Activated CD4-positive, alpha-beta T cell treated with anti-CD3 and anti-CD28 coated beads for 36 hours (primary cell): ENCODE measurements at regions of chr12 and their contacts with region 1.

Region 1: DNA sequence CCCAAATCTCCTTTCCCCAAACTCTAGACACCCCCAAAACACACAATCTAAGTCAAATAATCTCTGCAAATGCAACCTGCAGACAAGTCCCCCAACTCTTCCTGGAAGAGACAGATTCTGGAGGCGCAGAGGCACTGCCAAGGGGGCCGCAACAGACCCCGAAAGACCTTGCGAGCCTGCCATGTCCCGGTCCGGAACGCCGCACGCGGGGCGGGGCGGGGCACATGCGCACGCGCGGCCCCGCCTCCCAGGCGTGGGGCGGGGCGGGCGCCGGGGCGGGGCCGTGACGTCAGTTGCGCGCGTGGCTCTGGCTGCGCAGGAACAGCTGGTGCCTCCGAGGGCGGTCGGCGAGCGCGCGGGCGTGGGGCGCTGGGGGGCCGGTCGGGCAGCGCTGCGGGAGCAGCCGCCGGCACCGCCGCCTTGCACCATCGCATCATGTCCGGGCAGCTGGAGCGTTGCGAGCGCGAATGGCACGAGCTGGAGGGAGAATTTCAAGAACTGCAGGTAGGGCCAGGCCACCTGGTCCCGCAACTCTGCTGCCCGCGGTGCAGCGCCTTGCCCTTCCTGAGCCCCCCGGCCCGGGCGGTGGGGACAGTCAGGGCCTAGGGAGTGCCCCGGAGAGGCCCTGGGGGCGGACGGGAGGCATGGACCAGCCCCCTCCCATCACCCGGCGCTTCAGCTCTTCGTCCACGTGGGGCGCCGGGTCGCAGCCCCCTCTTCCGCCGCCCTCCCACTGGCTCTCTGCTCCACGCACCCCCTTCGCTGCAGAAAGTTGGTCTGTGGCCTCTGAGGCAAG is at the start of gene TMEM120B:
- DNase-seq: peak; percentile 90
- ATAC-seq: peak; percentile 87
- H3K4me3 Mint-ChIP-seq: peak within 1 kb of the TSS; percentile 95
- H3K27ac Mint-ChIP-seq: peak within 1 kb of the TSS; percentile 91
- H3K4me1 Mint-ChIP-seq: peaks cover 16% of the 10 kb centered on the region
- H3K27me3 Mint-ChIP-seq: no peaks in the 10 kb centered on the region
- total RNA-seq, gene TMEM120B: 8.8 to 11.7 TPM

Region 2: GRCh38 chr12:121467115-121467793 is 245.4 kb before region 1 on chr12:
- CTCF ChIA-PET with region 1: no interaction called
- POLR2A ChIA-PET with region 1: no interaction called
- intact Hi-C with region 1: loop called in 1 of 2 experiments (anchors 1 kb)
- DNase-seq: peak; percentile 93
- ATAC-seq: peak; percentile 94
- H3K4me3 Mint-ChIP-seq: peak overlapping the region; percentile 57
- H3K27ac Mint-ChIP-seq: no peak overlapping the region
- H3K4me1 Mint-ChIP-seq: peaks cover 20% of the 10 kb centered on the region
- H3K27me3 Mint-ChIP-seq: no peaks in the 10 kb centered on the region

Region 3: GRCh38 chr12:121688966-121689365 is 23.7 kb before region 1 on chr12:
- CTCF ChIA-PET with region 1: interaction called, 5 read pairs
- POLR2A ChIA-PET with region 1: no interaction called
- intact Hi-C with region 1: loop called in 1 of 2 experiments (anchors 1 kb)
- DNase-seq: no peak
- ATAC-seq: no peak
- H3K4me3 Mint-ChIP-seq: no peak overlapping the region
- H3K27ac Mint-ChIP-seq: no peak overlapping the region
- H3K4me1 Mint-ChIP-seq: peaks cover 7% of the 10 kb centered on the region
- H3K27me3 Mint-ChIP-seq: no peaks in the 10 kb centered on the region

Region 4: GRCh38 chr12:121773011-121773777 is 60.5 kb after region 1 on chr12:
- CTCF ChIA-PET with region 1: interaction called, 5 read pairs
- POLR2A ChIA-PET with region 1: no interaction called
- intact Hi-C with region 1: loop called (anchors 1 kb)
- DNase-seq: peak; percentile 90
- ATAC-seq: peak; percentile 83
- H3K4me3 Mint-ChIP-seq: no peak overlapping the region
- H3K27ac Mint-ChIP-seq: peak overlapping the region; percentile 81
- H3K4me1 Mint-ChIP-seq: peaks cover 11% of the 10 kb centered on the region
- H3K27me3 Mint-ChIP-seq: no peaks in the 10 kb centered on the region

Region 5: DNA sequence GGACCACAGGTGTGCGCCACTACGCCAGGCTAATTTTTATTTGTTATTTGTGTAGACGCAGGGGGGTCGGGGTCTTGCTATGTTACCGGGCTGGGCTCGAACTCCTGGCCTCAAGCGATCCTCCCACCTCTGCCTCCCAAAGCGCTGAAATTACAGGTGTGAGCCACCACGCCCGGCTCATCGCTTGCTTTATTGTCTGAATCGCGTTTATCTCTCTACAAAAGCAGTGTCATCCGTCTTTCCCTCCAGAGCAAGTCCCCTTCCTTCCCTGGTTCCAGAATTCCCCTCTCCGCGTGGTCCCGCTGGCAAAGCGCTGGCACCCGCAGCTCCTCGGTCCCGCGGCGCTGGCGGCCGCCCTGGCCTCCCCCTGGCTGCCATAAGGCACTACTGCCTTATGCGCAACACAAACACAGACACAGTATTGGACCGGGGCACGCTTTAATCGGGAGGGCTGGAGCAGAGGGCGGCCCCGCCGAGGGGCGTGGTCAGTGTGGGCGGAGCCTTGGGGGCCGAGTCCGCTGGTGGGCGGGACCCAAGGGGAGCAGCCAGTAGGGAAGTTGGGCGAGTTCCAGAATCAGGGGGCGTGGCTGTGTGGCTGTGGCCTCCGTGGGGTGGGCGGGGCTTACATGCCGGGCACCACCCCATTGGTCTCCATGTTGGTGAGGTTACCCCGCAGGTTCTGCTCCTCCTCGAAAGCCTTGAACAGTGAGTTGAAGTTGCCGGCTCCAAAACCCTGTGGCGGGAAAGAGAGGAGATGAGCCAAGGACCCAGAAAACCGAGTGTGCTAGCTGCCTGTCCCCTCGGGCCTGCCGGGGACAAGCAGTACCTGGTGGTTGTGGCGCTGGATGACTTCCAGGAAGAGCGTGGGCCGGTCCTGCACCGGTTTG is 126.7 kb after region 1 on chr12:
- CTCF ChIA-PET with region 1: no interaction called
- POLR2A ChIA-PET with region 1: no interaction called
- intact Hi-C with region 1: loop called in 1 of 2 experiments (anchors 1 kb)
- DNase-seq: peak; percentile 100
- ATAC-seq: peak; percentile 94
- H3K4me3 Mint-ChIP-seq: peak overlapping the region; percentile 91
- H3K27ac Mint-ChIP-seq: peak overlapping the region; percentile 91
- H3K4me1 Mint-ChIP-seq: peaks cover 14% of the 10 kb centered on the region
- H3K27me3 Mint-ChIP-seq: no peaks in the 10 kb centered on the region

Region 6: GRCh38 chr12:123264681-123265438 is 1552.2 kb after region 1 on chr12:
- CTCF ChIA-PET with region 1: no interaction called
- POLR2A ChIA-PET with region 1: no interaction called
- intact Hi-C with region 1: no loop called
- DNase-seq: peak; percentile 41
- ATAC-seq: no peak
- H3K4me3 Mint-ChIP-seq: no peak overlapping the region
- H3K27ac Mint-ChIP-seq: no peak overlapping the region
- H3K4me1 Mint-ChIP-seq: peaks cover 14% of the 10 kb centered on the region
- H3K27me3 Mint-ChIP-seq: no peaks in the 10 kb centered on the region